ENCODE measurements at regions of chr14 and their contacts with region 1.

Region 1: GRCh38 chr14:24366721-24367513 is 1.1 kb upstream of the NFATC4 start:
- DNase-seq: peak in 2 of 3 donors; percentile 34 to 48
- H3K4me3 ChIP-seq: peak overlapping the region in 6 of 7 experiments; percentile 23 to 69 (median 46)
- H3K27ac ChIP-seq: no peak overlapping the region
- H3K4me1 ChIP-seq: peaks cover 0 to 33% (median 32%) of the 10 kb centered on the region in 4 experiments
- H3K27me3 ChIP-seq: peaks cover 0 to 23% (median 6%) of the 10 kb centered on the region in 5 experiments

Region 2: GRCh38 chr14:24339284-24340151 is 27.4 kb before region 1 on chr14 and contains the start of gene RIPK3:
- CTCF ChIA-PET with region 1: interaction called, 40 read pairs
- POLR2A ChIA-PET with region 1: interaction called, 4 read pairs
- DNase-seq: peak in 2 of 3 donors; percentile 62 to 74
- H3K4me3 ChIP-seq: peak within 1 kb of the TSS; percentile 43 to 91 (median 75)
- H3K27ac ChIP-seq: peak within 1 kb of the TSS in 1 of 2 experiments; percentile 53
- H3K4me1 ChIP-seq: peaks cover 7 to 40% (median 38%) of the 10 kb centered on the region in 4 experiments
- H3K27me3 ChIP-seq: peaks cover 0 to 10% (median 2%) of the 10 kb centered on the region in 5 experiments

Region 3: GRCh38 chr14:24387009-24387345 is 20.1 kb after region 1 on chr14:
- CTCF ChIA-PET with region 1: interaction called, 16 read pairs
- POLR2A ChIA-PET with region 1: interaction called, 3 read pairs
- DNase-seq: no peak
- H3K4me3 ChIP-seq: no peak overlapping the region
- H3K27ac ChIP-seq: no peak overlapping the region
- H3K4me1 ChIP-seq: peaks cover 6 to 23% (median 18%) of the 10 kb centered on the region in 4 experiments
- H3K27me3 ChIP-seq: no peaks in the 10 kb centered on the region

Region 4: GRCh38 chr14:24398653-24399446 is 31.9 kb after region 1 on chr14 and contains the start of gene NYNRIN:
- CTCF ChIA-PET with region 1: interaction called, 55 read pairs
- POLR2A ChIA-PET with region 1: interaction called, 8 read pairs
- DNase-seq: peak; percentile 45 to 82 (median 76)
- H3K4me3 ChIP-seq: peak within 1 kb of the TSS; percentile 42 to 84 (median 68)
- H3K27ac ChIP-seq: peak within 1 kb of the TSS in 1 of 2 experiments; percentile 20
- H3K4me1 ChIP-seq: peaks cover 12 to 75% (median 58%) of the 10 kb centered on the region in 4 experiments
- H3K27me3 ChIP-seq: no peaks in the 10 kb centered on the region

Region 5: DNA sequence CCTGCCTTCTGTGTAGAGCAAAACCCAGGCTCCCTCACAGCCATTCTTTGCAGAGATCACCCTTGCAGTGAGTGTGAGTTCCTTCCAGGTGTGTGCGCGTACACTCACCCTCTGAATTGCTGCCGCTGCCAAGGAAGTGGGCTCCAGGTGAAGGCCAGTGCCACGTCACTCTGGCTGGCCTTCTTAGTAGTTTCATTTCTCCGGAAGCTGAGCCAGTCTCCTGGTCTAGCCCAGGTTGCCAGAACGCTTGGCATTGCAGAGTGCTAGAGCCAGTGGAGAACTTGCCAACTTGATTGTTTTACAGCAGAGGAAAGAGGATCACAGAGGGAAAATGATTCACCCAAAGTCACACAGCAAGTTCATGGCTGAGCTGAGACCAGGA is 51.6 kb after region 1 on chr14:
- CTCF ChIA-PET with region 1: interaction called, 81 read pairs
- POLR2A ChIA-PET with region 1: no interaction called
- DNase-seq: no peak
- H3K4me3 ChIP-seq: no peak overlapping the region
- H3K27ac ChIP-seq: no peak overlapping the region
- H3K4me1 ChIP-seq: peaks cover 17 to 24% (median 18%) of the 10 kb centered on the region in 4 experiments
- H3K27me3 ChIP-seq: peaks cover 0 to 18% (median 9%) of the 10 kb centered on the region in 5 experiments

Region 6: GRCh38 chr14:24431569-24432258 is 64.8 kb after region 1 on chr14:
- CTCF ChIA-PET with region 1: interaction called, 130 read pairs
- POLR2A ChIA-PET with region 1: interaction called, 7 read pairs
- DNase-seq: peak; percentile 94 to 96 (median 95)
- H3K4me3 ChIP-seq: peak overlapping the region in 3 of 7 experiments; percentile 81 to 93 (median 89)
- H3K27ac ChIP-seq: no peak overlapping the region
- H3K4me1 ChIP-seq: peaks cover 12 to 68% (median 66%) of the 10 kb centered on the region in 4 experiments
- H3K27me3 ChIP-seq: no peaks in the 10 kb centered on the region